Activated naive CD4-positive, alpha-beta T cell treated with anti-CD3 and anti-CD28 coated beads for 36 hours (primary cell): ENCODE measurements at regions of chr1 and their contacts with region 1.

Region 1: GRCh38 chr1:172837816-172838680 is 179.1 kb downstream of the FASLG start:
- DNase-seq: peak; percentile 46
- H3K4me3 Mint-ChIP-seq: no peak overlapping the region
- H3K27ac Mint-ChIP-seq: no peak overlapping the region
- H3K4me1 Mint-ChIP-seq: peaks cover 19% of the 10 kb centered on the region
- H3K27me3 Mint-ChIP-seq: peaks cover 25% of the 10 kb centered on the region

Region 2: GRCh38 chr1:172638885-172639831 is 198.9 kb before region 1 on chr1:
- CTCF ChIA-PET with region 1: no interaction called
- intact Hi-C with region 1: loop called (anchors 1 kb)
- DNase-seq: peak; percentile 90
- H3K4me3 Mint-ChIP-seq: peak overlapping the region; percentile 42
- H3K27ac Mint-ChIP-seq: peak overlapping the region; percentile 93
- H3K4me1 Mint-ChIP-seq: peaks cover 73% of the 10 kb centered on the region
- H3K27me3 Mint-ChIP-seq: peaks cover 9% of the 10 kb centered on the region

Region 3: DNA sequence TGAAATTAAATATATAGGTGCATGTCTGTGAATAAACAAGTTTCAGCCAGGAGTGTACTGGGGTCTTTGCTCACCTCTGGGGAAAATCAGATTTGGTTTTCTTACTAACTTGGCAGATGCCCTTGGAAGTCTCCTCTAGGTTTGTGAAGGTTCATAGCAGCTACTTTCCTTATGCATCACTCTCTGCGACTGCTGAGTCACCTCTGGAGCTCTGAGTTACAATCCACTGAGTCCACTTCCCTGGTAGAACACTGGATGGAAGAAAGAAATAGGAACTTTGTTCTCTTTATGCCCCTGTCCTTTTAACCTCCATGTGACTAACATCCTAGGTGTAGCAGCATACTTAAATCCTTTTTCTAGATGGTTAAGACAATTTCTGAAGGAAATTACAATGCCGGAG is 183.5 kb before region 1 on chr1:
- CTCF ChIA-PET with region 1: no interaction called
- intact Hi-C with region 1: no loop called
- DNase-seq: peak; percentile 50
- H3K4me3 Mint-ChIP-seq: no peak overlapping the region
- H3K27ac Mint-ChIP-seq: no peak overlapping the region
- H3K4me1 Mint-ChIP-seq: peaks cover 28% of the 10 kb centered on the region
- H3K27me3 Mint-ChIP-seq: no peaks in the 10 kb centered on the region

Region 4: GRCh38 chr1:172778456-172779455 is 59.3 kb before region 1 on chr1:
- CTCF ChIA-PET with region 1: interaction called, 3 read pairs
- intact Hi-C with region 1: loop called (anchors 1 kb)
- DNase-seq: no peak
- H3K4me3 Mint-ChIP-seq: no peak overlapping the region
- H3K27ac Mint-ChIP-seq: no peak overlapping the region
- H3K4me1 Mint-ChIP-seq: peaks cover 16% of the 10 kb centered on the region
- H3K27me3 Mint-ChIP-seq: no peaks in the 10 kb centered on the region

Region 5: DNA sequence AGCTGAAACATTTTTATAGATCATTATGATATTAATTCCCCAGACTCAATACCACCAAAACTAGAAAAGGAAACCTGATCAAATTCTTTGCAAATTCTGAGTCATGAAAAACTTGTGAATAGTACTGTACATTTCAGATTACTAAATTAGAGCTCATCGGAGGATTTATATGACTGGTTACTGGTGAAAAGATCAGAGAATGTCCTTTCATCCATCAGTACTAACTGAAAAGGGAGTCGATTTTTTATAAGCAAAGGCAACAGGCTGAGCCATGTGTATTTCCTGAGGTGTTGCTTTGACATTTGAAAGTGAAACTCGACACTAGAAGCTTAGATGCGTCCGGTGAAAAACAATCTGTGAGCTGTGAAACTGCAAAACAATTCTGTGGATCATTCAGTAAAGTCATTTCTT is 57.0 kb after region 1 on chr1:
- CTCF ChIA-PET with region 1: no interaction called
- intact Hi-C with region 1: loop called (anchors 1 kb)
- DNase-seq: peak; percentile 40
- H3K4me3 Mint-ChIP-seq: no peak overlapping the region
- H3K27ac Mint-ChIP-seq: peak overlapping the region; percentile 9
- H3K4me1 Mint-ChIP-seq: peaks cover 42% of the 10 kb centered on the region
- H3K27me3 Mint-ChIP-seq: peaks cover 4% of the 10 kb centered on the region

Region 6: DNA sequence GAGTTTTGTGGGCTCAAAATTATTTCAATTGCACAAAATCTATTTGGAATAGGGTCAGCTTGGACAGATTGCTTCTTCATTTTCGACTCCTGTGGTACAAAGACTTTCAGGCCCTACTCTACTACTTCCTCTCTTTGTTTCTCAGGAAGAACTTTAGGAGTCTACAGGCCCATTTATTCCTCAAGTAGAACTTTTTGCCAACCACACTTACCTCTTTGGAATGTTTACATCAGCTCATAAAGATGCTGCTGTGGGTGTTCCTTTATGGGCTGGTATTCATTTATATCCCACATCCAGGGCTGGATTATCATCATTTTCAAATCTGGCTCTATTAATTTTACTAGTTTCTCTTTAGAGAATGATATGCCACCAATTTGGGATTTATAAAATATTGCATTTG is 259.0 kb after region 1 on chr1:
- CTCF ChIA-PET with region 1: no interaction called
- intact Hi-C with region 1: no loop called
- DNase-seq: no peak
- H3K4me3 Mint-ChIP-seq: no peak overlapping the region
- H3K27ac Mint-ChIP-seq: no peak overlapping the region
- H3K4me1 Mint-ChIP-seq: no peaks in the 10 kb centered on the region
- H3K27me3 Mint-ChIP-seq: no peaks in the 10 kb centered on the region

Region 7: DNA sequence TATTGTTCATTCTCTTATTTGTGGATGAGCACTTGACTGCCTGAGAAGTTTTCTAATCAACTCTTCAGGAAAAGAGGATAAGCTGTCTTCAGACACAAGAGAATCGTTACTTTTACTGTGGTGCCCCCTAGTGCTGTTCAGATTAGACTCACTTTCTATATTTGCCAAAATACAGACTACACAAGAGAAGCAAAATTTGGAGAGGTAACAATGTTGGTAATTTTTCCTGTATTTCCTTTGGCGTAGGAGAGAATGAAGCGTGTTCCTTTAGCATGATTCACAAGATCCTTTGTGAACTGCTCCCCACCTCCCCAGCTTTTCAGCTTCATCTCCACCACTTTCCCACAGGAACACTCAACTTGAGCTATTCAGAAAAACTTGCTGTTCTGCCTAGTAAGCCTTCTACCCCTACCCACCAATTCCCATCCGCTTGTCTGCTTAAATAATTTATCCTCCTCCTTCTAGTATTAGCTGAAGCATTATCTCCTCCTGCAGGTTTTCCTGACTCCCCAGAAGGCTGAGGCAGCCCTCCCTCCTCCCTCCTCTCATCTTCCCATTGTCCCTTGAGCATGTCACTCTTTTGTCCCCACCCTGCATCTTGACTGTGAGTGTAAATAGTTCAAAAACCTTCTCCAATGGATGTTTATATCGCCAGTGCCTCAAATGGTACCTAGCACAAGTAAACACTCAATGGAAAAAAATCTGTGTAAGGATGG is 364.5 kb after region 1 on chr1:
- CTCF ChIA-PET with region 1: interaction called, 3 read pairs
- intact Hi-C with region 1: loop called (anchors 1 kb)
- DNase-seq: peak; percentile 39
- H3K4me3 Mint-ChIP-seq: no peak overlapping the region
- H3K27ac Mint-ChIP-seq: no peak overlapping the region
- H3K4me1 Mint-ChIP-seq: peaks cover 37% of the 10 kb centered on the region
- H3K27me3 Mint-ChIP-seq: peaks cover 4% of the 10 kb centered on the region

Region 8: DNA sequence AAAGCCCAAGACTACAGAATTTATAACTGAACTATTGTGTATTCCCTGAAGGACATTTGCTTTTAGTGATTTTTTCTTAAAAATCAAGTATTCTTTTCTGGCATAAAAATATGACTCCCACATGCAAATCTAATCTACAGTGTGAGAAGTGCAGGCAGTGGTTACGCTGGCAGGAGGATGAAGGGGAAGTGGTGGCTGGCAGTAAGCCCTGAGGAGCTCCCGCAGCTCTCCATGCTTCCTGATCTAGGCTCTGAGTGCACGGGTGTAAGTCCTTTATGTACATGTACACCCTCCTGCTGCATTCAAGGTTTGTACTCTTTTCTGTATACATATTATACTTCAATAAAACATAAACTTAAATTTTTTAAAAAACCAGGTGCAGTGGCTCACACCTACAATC is 571.6 kb after region 1 on chr1:
- CTCF ChIA-PET with region 1: no interaction called
- intact Hi-C with region 1: loop called (anchors 5 kb)
- DNase-seq: no peak
- H3K4me3 Mint-ChIP-seq: no peak overlapping the region
- H3K27ac Mint-ChIP-seq: no peak overlapping the region
- H3K4me1 Mint-ChIP-seq: peaks cover 36% of the 10 kb centered on the region
- H3K27me3 Mint-ChIP-seq: no peaks in the 10 kb centered on the region